Naive thymus-derived CD4-positive, alpha-beta T cell (primary cell): ENCODE measurements at regions of chr18 and their contacts with region 1.

Region 1: DNA sequence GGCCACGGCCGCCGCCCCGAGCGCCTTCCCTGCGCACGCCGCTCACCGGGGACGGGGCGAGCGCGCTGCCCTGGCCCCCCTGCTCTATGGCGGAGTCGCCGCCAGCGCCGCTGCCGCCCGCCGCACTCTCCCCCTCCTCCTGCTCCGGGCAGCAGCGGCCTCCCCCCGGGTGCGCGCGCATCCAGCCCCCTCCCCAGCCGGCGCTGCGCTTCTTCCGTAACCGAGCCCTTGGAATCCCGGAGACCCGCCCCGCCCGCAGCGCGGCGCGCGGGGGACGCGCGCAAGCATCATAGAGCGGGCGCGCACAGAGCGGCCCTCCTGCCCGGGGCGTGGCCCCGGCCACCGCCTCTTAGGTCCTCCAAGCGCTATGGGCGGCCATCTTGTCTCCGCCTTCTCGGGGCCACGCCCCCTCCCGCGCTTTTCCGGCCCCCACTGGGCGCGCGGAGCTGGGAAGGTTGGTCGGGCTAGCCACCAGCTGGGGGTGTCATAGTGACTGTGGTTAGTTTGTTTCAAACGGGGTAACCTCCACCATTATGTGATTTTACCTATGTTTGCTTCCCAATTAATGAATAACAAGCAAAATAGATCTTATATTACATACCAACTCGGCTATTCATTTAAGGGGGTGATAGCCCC is at the start of gene MBD2:
- DNase-seq: peak; percentile 87 to 96 (median 90)
- ATAC-seq: peak; percentile 96
- H3K4me3 ChIP-seq: peak within 1 kb of the TSS; percentile 49
- H3K4me3 Mint-ChIP-seq: peak within 1 kb of the TSS; percentile 87 to 96 (median 92)
- H3K27ac ChIP-seq: peak within 1 kb of the TSS; percentile 72
- H3K27ac Mint-ChIP-seq: peak within 1 kb of the TSS; percentile 81 to 98 (median 92)
- H3K4me1 ChIP-seq: peaks cover 10 to 19% of the 10 kb centered on the region in 2 donors
- H3K4me1 Mint-ChIP-seq: peaks cover 14 to 43% (median 41%) of the 10 kb centered on the region in 7 donors
- H3K27me3 ChIP-seq: no peaks in the 10 kb centered on the region
- H3K27me3 Mint-ChIP-seq: no peaks in the 10 kb centered on the region
- total RNA-seq, gene MBD2: 69.7 to 118 (median 76.9) TPM

Region 2: GRCh38 chr18:54149078-54149697 is 75.3 kb before region 1 on chr18:
- CTCF ChIA-PET with region 1: no interaction called
- POLR2A ChIA-PET with region 1: no interaction called
- intact Hi-C with region 1: loop called in 1 of 2 experiments (anchors 5 kb)
- DNase-seq: peak in 1 of 9 donors; percentile 48
- ATAC-seq: no peak
- H3K4me3 ChIP-seq: no peak overlapping the region
- H3K4me3 Mint-ChIP-seq: peak overlapping the region in 2 of 10 donors; percentile 30 to 60
- H3K27ac ChIP-seq: no peak overlapping the region
- H3K27ac Mint-ChIP-seq: peak overlapping the region in 6 of 9 donors; percentile 5 to 91 (median 53)
- H3K4me1 ChIP-seq: no peaks in the 10 kb centered on the region
- H3K4me1 Mint-ChIP-seq: peaks cover 0 to 44% (median 8%) of the 10 kb centered on the region in 7 donors
- H3K27me3 ChIP-seq: no peaks in the 10 kb centered on the region
- H3K27me3 Mint-ChIP-seq: no peaks in the 10 kb centered on the region

Region 3: GRCh38 chr18:54247511-54248175 is 23.1 kb after region 1 on chr18:
- CTCF ChIA-PET with region 1: interaction called, 3 read pairs
- POLR2A ChIA-PET with region 1: interaction called, 6 read pairs
- intact Hi-C with region 1: loop called in 1 of 2 experiments (anchors 1 kb)
- DNase-seq: no peak
- ATAC-seq: no peak
- H3K4me3 ChIP-seq: no peak overlapping the region
- H3K4me3 Mint-ChIP-seq: peak overlapping the region; percentile 23 to 85 (median 72)
- H3K27ac ChIP-seq: peak overlapping the region; percentile 68
- H3K27ac Mint-ChIP-seq: peak overlapping the region in 8 of 9 donors; percentile 88 to 96 (median 95)
- H3K4me1 ChIP-seq: peaks cover 0 to 10% of the 10 kb centered on the region in 2 donors
- H3K4me1 Mint-ChIP-seq: peaks cover 10 to 29% (median 24%) of the 10 kb centered on the region in 7 donors
- H3K27me3 ChIP-seq: no peaks in the 10 kb centered on the region
- H3K27me3 Mint-ChIP-seq: no peaks in the 10 kb centered on the region

Region 4: DNA sequence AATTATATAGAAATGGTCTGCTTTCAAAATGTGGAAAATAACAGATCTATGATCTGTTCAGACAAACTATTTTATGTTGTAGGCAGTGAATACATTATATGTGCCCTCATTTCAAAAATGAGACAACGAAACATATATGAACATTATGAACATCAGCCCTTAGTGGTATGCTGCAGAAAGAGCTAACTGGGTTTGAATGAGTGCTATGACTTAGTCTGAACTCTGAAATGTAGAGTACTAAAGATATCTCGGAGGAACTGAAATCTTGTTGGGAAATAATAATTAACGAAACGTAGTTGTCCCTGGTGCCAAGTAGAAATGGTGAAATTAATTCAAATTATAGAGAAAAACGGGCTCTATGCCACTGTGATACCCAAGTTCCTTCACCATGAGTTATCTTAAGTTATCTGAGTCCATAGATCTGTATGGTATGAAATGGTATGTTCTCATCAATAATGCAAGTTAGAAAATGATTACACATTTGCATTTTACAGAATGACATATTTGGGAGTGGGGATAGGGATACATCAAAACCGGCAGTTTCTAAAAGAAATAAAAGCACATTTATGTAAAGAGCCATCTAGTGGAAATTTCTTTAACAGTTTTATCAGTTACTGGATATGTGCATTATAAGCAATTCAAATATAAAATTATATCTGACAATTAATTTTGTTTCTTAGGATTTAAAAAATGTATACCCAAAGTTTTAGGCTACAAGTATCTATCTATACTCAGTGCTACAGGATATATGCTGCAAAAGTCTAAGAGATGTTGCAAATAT is 106.5 kb after region 1 on chr18:
- CTCF ChIA-PET with region 1: no interaction called
- POLR2A ChIA-PET with region 1: interaction called, 3 read pairs
- intact Hi-C with region 1: loop called (anchors 1 kb)
- DNase-seq: no peak
- ATAC-seq: no peak
- H3K4me3 ChIP-seq: no peak overlapping the region
- H3K4me3 Mint-ChIP-seq: no peak overlapping the region
- H3K27ac ChIP-seq: no peak overlapping the region
- H3K27ac Mint-ChIP-seq: no peak overlapping the region
- H3K4me1 ChIP-seq: no peaks in the 10 kb centered on the region
- H3K4me1 Mint-ChIP-seq: no peaks in the 10 kb centered on the region
- H3K27me3 ChIP-seq: no peaks in the 10 kb centered on the region
- H3K27me3 Mint-ChIP-seq: peaks cover 9 to 17% (median 10%) of the 10 kb centered on the region in 5 donors

Region 5: DNA sequence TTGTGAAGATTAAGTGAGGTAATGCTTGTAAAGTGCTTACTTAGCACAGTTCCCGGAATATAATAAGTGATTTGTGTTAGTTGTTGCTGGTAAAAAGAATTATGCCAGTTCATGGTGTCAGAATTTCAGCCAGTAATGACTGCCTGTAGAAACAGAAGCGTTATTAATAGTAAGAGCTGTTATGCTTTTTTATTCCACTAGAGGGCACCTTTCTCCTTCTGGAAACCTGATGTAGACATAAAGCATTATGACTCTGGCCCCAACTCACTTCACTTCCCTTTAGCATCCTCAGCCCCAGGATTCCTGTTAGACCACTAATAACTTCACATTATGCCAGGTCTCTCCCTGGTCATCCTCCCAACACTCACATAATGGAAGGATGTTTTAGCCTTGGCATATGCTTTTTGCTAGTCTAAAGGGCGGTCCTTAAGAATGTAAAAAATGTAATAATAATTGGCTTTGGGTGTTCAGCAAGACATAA is 168.1 kb after region 1 on chr18:
- CTCF ChIA-PET with region 1: interaction called, 4 read pairs
- POLR2A ChIA-PET with region 1: interaction called, 4 read pairs
- intact Hi-C with region 1: loop called (anchors 1 kb)
- DNase-seq: peak in 7 of 9 donors; percentile 5 to 55 (median 39)
- ATAC-seq: peak; percentile 80
- H3K4me3 ChIP-seq: no peak overlapping the region
- H3K4me3 Mint-ChIP-seq: no peak overlapping the region
- H3K27ac ChIP-seq: no peak overlapping the region
- H3K27ac Mint-ChIP-seq: no peak overlapping the region
- H3K4me1 ChIP-seq: no peaks in the 10 kb centered on the region
- H3K4me1 Mint-ChIP-seq: peaks cover 0 to 37% (median 0%) of the 10 kb centered on the region in 7 donors
- H3K27me3 ChIP-seq: no peaks in the 10 kb centered on the region
- H3K27me3 Mint-ChIP-seq: peaks cover 9 to 29% (median 16%) of the 10 kb centered on the region in 5 donors

Region 6: DNA sequence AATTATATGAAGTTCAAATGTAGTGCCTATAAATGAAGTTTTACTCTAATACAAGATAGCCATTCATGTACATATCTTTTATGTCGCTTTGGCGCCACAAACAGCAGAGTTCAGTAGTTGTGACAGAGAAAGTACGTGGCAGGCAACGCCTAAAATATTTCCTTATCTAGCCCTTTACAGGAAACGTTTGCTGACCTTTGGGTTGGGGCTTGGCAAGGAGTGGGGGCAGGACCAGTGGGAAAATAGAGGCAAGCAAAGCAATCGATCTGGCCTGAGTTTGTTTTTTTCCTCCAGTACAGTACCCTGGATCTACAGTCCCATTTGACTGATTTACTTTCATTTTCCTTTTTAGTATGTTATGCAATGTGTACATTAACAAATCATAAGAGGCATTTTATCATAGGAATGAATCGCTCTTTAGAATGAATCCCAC is 721.7 kb after region 1 on chr18:
- CTCF ChIA-PET with region 1: no interaction called
- POLR2A ChIA-PET with region 1: no interaction called
- intact Hi-C with region 1: loop called in 1 of 2 experiments (anchors 5 kb)
- DNase-seq: peak in 7 of 9 donors; percentile 4 to 41 (median 25)
- ATAC-seq: peak; percentile 79
- H3K4me3 ChIP-seq: peak overlapping the region; percentile 68
- H3K4me3 Mint-ChIP-seq: peak overlapping the region; percentile 72 to 94 (median 90)
- H3K27ac ChIP-seq: peak overlapping the region; percentile 63
- H3K27ac Mint-ChIP-seq: peak overlapping the region; percentile 83 to 97 (median 91)
- H3K4me1 ChIP-seq: peaks cover 0 to 5% of the 10 kb centered on the region in 2 donors
- H3K4me1 Mint-ChIP-seq: peaks cover 9 to 28% (median 19%) of the 10 kb centered on the region in 7 donors
- H3K27me3 ChIP-seq: no peaks in the 10 kb centered on the region
- H3K27me3 Mint-ChIP-seq: peaks cover 0 to 18% (median 0%) of the 10 kb centered on the region in 5 donors